GM10248 (cell line): ENCODE measurements at regions of chr17 and their contacts with region 1.

Region 1: GRCh38 chr17:45828628-45829027 is 16.1 kb upstream of the SPPL2C start:
- DNase-seq: no peak
- CTCF ChIP-seq: no peak

Region 2: DNA sequence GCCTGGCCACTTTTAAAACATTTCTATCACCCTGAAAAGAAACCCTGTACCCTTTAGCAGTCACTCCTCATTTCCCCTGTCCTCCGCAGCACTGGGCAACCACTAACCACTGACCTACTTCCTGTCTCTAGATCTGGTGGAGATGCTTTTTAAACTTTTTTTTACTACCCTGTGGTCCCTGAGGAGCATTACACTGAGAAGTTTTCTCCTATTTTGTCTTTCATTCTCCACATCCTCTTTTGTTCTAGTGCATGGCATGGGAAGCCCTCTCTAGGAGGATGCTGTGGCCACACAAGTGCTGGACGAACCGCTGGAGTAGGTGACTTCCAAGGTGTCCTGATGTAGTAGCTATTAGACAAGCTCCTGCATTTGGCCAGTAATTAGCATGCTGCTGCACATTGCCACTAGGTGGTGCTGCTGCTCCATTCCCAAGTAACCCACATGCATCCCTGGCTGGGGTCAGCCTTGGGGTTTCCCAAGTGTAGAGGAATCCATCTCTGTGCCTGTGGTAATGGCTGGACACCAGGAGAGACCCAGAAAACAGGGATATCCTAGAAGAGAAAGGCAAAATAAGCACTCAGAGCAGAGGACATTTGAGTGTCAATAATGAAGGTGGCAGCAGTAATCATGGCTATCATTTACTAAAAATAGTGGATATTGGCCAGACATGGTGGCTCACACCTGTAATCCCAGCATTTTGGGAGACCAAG is 188.3 kb before region 1 on chr17:
- CTCF ChIA-PET with region 1: interaction called, 97 read pairs
- POLR2A ChIA-PET with region 1: no interaction called
- DNase-seq: peak; percentile 73
- CTCF ChIP-seq: peak; percentile 99

Region 3: DNA sequence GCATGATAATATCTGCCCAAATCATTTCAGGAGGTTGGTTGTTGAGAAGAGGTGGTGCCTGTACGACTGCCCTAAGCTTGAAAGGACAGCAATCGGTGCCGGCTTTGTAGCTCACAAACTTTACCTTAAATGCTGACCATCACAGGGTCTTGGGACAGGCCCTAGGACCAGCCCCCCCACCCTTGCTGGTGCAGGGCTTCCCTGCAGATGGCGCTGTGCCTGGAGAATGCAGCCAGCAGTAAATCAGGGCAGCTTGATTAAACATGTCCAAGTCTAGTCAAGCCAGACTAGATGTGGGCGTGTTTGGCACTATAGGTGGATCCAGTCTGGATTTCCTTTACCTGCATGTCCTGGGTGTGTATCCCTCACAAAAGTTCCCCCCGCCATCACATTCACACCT is 180.0 kb before region 1 on chr17:
- CTCF ChIA-PET with region 1: interaction called, 12 read pairs
- POLR2A ChIA-PET with region 1: no interaction called
- DNase-seq: no peak
- CTCF ChIP-seq: no peak

Region 4: GRCh38 chr17:45814622-45815606 is 13.7 kb before region 1 on chr17:
- CTCF ChIA-PET with region 1: interaction called, 48 read pairs
- POLR2A ChIA-PET with region 1: no interaction called
- DNase-seq: no peak
- CTCF ChIP-seq: no peak

Region 5: DNA sequence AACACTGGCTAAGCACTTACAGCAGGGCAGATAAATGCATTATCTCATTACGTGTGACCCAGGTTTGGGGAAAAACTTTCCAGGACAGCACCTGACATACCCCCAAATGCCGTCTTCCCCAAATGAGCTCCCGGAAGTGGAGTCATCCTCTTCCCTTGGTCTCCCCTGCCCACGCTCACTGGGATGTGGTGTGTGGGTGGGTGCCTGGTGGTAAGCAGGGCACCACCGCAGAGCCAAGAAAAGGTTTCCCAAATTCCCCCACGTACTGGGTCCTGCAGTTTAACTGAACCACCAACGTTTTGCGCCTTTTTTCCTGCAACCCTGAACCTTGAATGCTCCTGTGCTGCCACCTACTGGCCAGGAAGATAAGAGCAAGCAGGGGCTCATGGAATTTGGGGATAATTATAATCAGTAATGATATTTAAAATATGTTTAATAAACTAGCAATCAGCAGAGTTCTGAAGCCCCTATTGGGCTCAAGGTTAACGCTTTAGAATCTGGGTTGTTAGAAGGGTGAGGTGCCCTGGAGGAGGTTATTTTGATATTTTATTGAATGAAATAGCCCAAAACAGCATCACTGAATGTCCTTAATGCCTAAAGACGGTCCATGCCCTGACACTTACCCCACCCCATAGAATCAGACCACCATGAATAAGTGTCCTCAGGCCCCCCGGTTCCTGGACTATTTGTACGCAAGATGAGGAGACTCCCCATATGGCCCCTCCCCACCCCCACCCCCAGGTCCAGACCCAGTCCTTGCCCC is 24.1 kb after region 1 on chr17:
- CTCF ChIA-PET with region 1: interaction called, 13 read pairs
- POLR2A ChIA-PET with region 1: no interaction called
- DNase-seq: peak; percentile 68
- CTCF ChIP-seq: peak; percentile 90

Region 6: DNA sequence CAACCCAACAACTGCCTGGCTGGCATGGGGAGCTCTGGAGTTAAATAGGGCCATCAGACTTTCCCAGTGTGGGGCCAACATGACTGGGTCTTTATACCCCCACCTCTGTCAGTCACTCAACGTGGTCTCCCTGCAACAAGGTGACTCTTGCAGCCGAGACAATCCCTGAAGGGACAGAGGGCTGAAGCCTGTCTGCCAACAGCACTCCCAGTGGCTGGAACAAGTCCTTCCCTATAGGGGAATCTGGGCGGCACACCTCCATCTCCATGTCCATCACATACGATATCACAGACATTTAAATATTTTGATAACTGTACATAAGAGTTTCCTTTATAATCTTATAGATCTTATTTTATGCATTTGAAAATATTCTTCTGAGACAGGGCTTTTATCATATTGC is 61.0 kb after region 1 on chr17:
- CTCF ChIA-PET with region 1: no interaction called
- POLR2A ChIA-PET with region 1: no interaction called
- DNase-seq: no peak
- CTCF ChIP-seq: no peak

Region 7: DNA sequence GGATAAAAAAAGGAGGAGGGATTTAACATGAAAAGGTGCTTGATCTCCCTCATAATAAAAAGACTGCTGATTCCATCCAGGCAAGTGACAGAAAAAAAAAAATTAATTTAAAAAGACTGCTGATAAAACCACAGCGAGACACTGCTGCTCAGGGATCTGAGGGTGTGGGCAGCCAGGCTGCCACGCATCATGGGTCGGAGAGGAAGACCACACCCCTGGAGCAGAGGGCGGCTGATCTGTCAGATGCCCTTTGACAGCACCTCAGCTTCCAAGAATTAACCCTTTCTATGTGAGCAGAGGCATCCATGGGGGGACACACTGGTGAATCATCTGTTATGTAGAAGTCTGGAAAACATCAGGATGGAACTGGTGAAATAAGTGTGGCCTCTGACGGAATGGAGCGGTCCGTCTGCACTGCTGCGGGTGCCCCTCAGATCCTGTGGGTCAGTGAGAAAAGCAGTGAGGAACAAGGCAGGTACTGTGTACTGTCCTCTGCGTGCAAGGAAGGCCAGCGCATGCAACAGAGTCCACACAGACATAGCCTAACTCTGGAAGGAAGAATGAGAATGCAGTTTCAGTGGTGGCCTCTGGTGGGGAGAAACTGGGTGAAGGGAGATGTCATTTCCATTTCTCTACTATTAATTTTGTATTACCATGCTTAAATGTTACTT is 85.6 kb after region 1 on chr17:
- CTCF ChIA-PET with region 1: no interaction called
- POLR2A ChIA-PET with region 1: no interaction called
- DNase-seq: no peak
- CTCF ChIP-seq: no peak